ENCODE measurements at regions of chr3 and their contacts with region 1.

Region 1: DNA sequence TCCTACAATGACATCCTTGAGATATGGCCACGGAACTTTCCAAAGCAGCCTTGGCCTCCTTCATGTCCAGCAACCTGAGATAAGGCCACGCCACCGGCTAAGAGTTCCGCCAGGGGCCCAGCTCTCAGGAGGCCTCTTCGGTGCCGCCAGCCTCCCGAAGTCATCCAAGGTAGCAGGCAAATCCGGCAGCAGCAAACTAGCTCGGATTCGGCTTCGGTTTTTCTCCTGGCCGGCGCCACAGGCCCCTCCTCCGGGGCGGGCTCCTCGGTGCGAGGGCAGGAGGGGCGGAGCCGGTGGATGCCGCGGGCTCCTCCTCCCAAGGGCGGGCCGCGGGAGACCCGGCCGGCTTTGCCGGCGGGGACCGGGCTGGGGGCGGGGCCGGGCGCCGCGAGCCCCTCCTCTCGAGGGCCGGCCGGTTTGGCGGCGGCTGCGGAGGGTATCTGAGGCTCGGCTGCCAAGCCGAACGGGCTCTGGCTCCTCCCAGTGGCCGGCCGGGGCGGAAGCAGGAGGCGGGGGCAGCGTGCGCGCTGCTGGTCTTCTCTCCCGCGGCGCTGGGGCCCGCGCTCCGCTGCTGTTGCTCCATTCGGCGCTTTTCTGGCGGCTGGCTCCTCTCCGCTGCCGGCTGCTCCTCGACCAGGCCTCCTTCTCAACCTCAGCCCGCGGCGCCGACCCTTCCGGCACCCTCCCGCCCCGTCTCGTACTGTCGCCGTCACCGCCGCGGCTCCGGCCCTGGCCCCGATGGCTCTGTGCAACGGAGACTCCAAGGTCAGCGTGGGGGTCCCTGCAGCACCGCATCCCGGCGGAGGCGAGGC is at the start of gene GMPS:
- DNase-seq: peak; percentile 96
- H3K4me3 ChIP-seq: peak within 1 kb of the TSS; percentile 95 to 100 (median 98)
- H3K27ac ChIP-seq: peak within 1 kb of the TSS; percentile 97 to 99 (median 98)
- H3K4me1 ChIP-seq: peaks cover 14 to 44% (median 37%) of the 10 kb centered on the region in 4 donors
- H3K27me3 ChIP-seq: no peaks in the 10 kb centered on the region
- CTCF ChIP-seq: peak; percentile 62 to 80 (median 74)
- EP300 ChIP-seq: no peak
- POLR2A ChIP-seq: no peak
- total RNA-seq, gene GMPS: 21.4 to 27.4 (median 27.2) TPM

Region 2: GRCh38 chr3:155744626-155745324 is 125.6 kb before region 1 on chr3 and contains the start of gene PLCH1:
- intact Hi-C with region 1: loop called (anchors 5 kb)
- DNase-seq: no peak
- H3K4me3 ChIP-seq: peak within 1 kb of the TSS; percentile 62 to 69 (median 66)
- H3K27ac ChIP-seq: peak within 1 kb of the TSS in 1 of 4 donors; percentile 53
- H3K4me1 ChIP-seq: peaks cover 6 to 35% (median 31%) of the 10 kb centered on the region in 4 donors
- H3K27me3 ChIP-seq: peaks cover 0 to 12% (median 0%) of the 10 kb centered on the region in 4 donors
- CTCF ChIP-seq: no peak
- EP300 ChIP-seq: no peak
- POLR2A ChIP-seq: no peak
- total RNA-seq, gene PLCH1: under 0.01 to 0.52 (median 0.36) TPM

Region 3: DNA sequence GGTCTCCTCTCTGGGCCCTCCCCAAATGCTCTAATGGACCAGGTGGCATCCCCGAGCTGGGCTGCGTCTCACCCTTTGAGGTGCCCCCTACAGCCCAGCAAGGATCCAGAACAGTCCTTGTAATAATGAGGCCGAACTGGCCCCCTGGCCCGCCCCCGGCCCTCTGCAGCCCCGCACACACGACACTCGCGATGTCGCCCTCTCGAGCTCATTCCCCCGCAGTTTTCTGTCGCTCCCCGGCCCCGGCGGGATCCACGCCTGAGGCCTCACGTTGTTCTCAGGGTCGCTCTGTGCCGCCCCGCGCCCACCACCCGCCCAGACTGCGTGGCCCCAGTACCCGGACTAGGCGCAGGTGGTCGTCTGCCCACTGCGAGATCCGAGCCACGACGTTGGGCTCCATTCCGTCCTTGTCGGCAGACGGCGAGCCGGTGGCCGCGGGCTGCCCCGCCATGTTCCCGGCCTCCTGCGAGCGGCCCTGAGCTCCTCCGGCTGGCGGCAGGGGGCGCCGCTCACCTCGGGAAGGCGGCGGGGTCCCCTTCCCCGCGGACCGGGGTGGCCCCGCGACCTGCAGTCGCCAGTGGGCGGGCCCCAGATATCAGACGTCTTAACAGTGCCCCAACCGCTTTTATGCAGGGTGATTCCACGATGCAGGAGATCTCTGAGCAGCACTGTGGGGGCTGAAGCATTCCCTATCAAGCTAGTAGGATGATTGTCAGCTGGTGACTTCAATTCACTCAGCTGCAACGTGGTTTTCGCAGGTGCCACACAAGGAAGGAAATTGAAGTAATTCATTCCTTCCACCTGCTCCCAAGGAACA is 64.3 kb before region 1 on chr3 and contains the start of gene C3orf33:
- intact Hi-C with region 1: loop called (anchors 5 kb)
- DNase-seq: no peak
- H3K4me3 ChIP-seq: peak within 1 kb of the TSS; percentile 73 to 88 (median 83)
- H3K27ac ChIP-seq: peak within 1 kb of the TSS; percentile 80 to 89 (median 86)
- H3K4me1 ChIP-seq: peaks cover 4 to 11% (median 9%) of the 10 kb centered on the region in 4 donors
- H3K27me3 ChIP-seq: no peaks in the 10 kb centered on the region
- CTCF ChIP-seq: peak; percentile 78 to 92 (median 80)
- EP300 ChIP-seq: no peak
- POLR2A ChIP-seq: no peak
- total RNA-seq, gene C3orf33: 2.8 to 3.7 (median 3.1) TPM

Region 4: DNA sequence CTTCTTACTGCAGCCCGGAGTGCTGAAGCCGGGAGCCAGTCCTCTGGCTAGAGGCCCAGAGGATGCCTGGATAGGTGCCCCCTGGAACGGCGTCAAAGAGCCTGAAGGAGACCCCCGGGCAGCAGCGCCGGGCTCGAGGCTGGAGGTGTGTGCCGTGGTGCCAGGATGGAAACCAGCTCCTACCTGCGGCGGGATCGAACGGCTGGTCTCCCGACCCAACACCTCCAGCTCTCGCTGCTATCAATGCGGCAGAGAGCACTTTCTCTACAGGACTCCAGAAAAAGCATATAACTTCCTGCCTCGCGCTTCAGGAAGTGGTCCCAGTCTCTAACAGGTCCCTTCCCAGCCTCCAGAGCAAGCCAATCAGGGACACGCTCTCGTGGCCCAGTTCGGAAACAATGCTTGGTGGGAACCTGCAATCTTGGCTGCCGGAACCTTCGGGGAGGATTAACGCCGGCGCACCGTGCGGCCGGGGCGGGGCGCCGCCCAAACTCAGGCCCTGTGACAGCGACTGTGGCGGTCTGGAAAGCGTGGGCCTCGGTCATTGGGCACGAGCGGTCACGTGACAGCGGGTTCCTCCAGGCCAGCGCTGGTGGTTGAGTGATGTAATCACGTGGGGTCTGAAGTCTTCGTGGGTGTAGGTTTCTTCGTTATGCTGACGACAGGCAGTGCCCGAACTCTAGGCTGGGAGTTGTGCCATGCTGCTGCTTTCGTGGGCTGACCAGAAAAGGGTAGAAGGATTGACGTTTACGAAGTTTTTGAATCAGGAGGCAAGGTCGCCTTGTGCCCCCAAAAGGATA is 16.0 kb before region 1 on chr3 and contains the start of gene SLC33A1:
- intact Hi-C with region 1: loop called (anchors 2 kb)
- DNase-seq: peak; percentile 100
- H3K4me3 ChIP-seq: peak within 1 kb of the TSS; percentile 67 to 93 (median 84)
- H3K27ac ChIP-seq: peak within 1 kb of the TSS; percentile 89 to 93 (median 90)
- H3K4me1 ChIP-seq: peaks cover 38 to 53% (median 50%) of the 10 kb centered on the region in 4 donors
- H3K27me3 ChIP-seq: no peaks in the 10 kb centered on the region
- CTCF ChIP-seq: peak in 1 of 3 experiments; percentile 32
- EP300 ChIP-seq: no peak
- POLR2A ChIP-seq: no peak
- total RNA-seq, gene SLC33A1: 17.4 to 22.2 (median 19.8) TPM

Region 5: GRCh38 chr3:155934230-155934629 is 63.9 kb after region 1 on chr3:
- intact Hi-C with region 1: no loop called
- DNase-seq: no peak
- H3K4me3 ChIP-seq: no peak overlapping the region
- H3K27ac ChIP-seq: no peak overlapping the region
- H3K4me1 ChIP-seq: peaks cover 0 to 6% (median 0%) of the 10 kb centered on the region in 4 donors
- H3K27me3 ChIP-seq: no peaks in the 10 kb centered on the region
- CTCF ChIP-seq: no peak
- EP300 ChIP-seq: no peak
- POLR2A ChIP-seq: no peak

Measured in esophagus muscularis mucosa (tissue), 4 donors.